AG04450 (cell line): ENCODE measurements at regions of chr6 and their contacts with region 1.

Region 1: GRCh38 chr6:158793432-158793831 is 25.7 kb downstream of the EZR start:
- DNase-seq: no peak
- H3K4me3 ChIP-seq: no peak overlapping the region
- H3K27ac ChIP-seq: no peak overlapping the region
- H3K27me3 ChIP-seq: no peaks in the 10 kb centered on the region
- CTCF ChIP-seq: peak; percentile 63

Region 2: GRCh38 chr6:158744986-158745430 is 48.4 kb before region 1 on chr6:
- CTCF ChIA-PET with region 1: no interaction called
- POLR2A ChIA-PET with region 1: no interaction called
- DNase-seq: no peak
- H3K4me3 ChIP-seq: no peak overlapping the region
- H3K27ac ChIP-seq: no peak overlapping the region
- H3K27me3 ChIP-seq: no peaks in the 10 kb centered on the region
- CTCF ChIP-seq: no peak

Region 3: GRCh38 chr6:158803733-158804143 is 10.3 kb after region 1 on chr6:
- CTCF ChIA-PET with region 1: no interaction called
- POLR2A ChIA-PET with region 1: no interaction called
- DNase-seq: no peak
- H3K4me3 ChIP-seq: no peak overlapping the region
- H3K27ac ChIP-seq: no peak overlapping the region
- H3K27me3 ChIP-seq: no peaks in the 10 kb centered on the region
- CTCF ChIP-seq: no peak

Region 4: GRCh38 chr6:158962371-158962770 is 168.9 kb after region 1 on chr6:
- CTCF ChIA-PET with region 1: no interaction called
- POLR2A ChIA-PET with region 1: no interaction called
- DNase-seq: no peak
- H3K4me3 ChIP-seq: no peak overlapping the region
- H3K27ac ChIP-seq: no peak overlapping the region
- H3K27me3 ChIP-seq: no peaks in the 10 kb centered on the region
- CTCF ChIP-seq: no peak

Region 5: DNA sequence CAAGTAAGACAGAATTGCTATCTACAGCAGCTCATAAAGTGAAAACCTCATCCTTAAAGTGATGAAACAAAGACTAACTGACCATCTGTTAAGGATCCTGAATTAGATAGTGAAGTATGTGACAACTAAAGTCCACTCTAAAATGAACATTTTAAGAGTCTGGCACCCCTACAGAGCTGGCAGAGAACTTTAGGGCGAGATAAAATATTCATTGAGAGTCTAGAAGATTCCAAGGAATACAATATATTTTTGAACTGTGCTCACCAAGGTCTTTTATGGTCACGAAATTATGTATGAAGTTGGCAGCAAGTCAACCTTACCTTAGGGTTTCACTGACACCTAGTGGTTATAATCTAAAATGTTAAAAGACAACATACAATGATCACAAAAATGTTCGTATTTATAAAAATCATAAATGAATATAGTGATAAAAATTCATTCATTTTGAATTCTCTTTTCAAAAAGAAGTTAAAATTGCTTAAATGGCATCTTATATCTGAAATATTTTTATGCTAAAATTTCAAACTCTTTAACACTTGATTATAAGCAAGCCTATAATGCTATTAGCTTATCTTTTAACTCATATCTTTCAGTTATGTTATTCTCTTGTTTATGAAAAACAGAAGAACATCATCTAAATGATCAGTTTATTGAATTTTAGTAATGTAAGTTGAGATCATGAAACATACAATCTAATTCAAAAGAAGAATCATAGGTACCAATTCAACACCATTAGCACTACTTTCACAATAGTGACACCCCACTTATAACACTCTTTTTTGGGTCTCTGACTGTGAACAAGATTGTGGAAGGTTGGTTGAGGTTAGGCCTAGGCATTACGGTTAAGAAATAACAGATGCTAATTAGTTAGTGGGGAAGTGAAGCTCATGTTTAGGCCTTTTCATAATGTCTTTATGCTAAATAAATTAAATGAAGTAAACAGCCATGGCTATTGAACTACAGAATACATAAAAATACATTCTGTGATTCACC is 179.1 kb after region 1 on chr6:
- CTCF ChIA-PET with region 1: interaction called, 47 read pairs
- POLR2A ChIA-PET with region 1: no interaction called
- DNase-seq: peak; percentile 11
- H3K4me3 ChIP-seq: no peak overlapping the region
- H3K27ac ChIP-seq: no peak overlapping the region
- H3K27me3 ChIP-seq: no peaks in the 10 kb centered on the region
- CTCF ChIP-seq: peak; percentile 53

Region 6: DNA sequence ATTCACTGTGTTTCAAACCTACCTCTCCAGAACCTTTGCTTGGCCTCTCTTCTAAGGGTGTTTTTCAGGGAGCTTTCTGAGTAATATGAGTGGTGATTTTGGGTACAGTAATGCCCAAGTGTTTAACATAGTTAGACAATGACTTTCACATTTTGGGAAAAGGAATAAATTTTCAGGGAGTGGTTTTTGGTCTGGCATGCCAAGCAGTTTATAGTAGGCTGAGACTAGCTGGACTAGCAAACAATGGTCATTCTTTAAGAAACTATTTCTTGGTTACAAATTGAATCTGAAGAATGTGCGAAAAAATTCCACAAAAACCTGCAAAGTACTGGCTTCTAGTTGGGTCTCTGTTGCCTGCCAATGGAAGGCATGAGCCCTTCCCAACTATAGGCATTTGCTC is 391.1 kb after region 1 on chr6:
- CTCF ChIA-PET with region 1: no interaction called
- POLR2A ChIA-PET with region 1: no interaction called
- DNase-seq: no peak
- H3K4me3 ChIP-seq: no peak overlapping the region
- H3K27ac ChIP-seq: no peak overlapping the region
- H3K27me3 ChIP-seq: no peaks in the 10 kb centered on the region
- CTCF ChIP-seq: no peak